ENCODE measurements at regions of chr1 and their contacts with region 1.

Region 1: GRCh38 chr1:10494754-10495474 is 20.2 kb downstream of the PEX14 start:
- DNase-seq: peak; percentile 95
- H3K4me3 Mint-ChIP-seq: peak overlapping the region; percentile 85
- H3K27ac Mint-ChIP-seq: peak overlapping the region; percentile 91
- H3K4me1 Mint-ChIP-seq: peaks cover 48% of the 10 kb centered on the region
- H3K27me3 Mint-ChIP-seq: no peaks in the 10 kb centered on the region

Region 2: GRCh38 chr1:10209905-10210810 is 284.8 kb before region 1 on chr1 and contains the start of gene KIF1B:
- intact Hi-C with region 1: loop called (anchors 10 kb)
- DNase-seq: peak; percentile 99
- H3K4me3 Mint-ChIP-seq: peak within 1 kb of the TSS; percentile 94
- H3K27ac Mint-ChIP-seq: peak within 1 kb of the TSS; percentile 86
- H3K4me1 Mint-ChIP-seq: peaks cover 26% of the 10 kb centered on the region
- H3K27me3 Mint-ChIP-seq: peaks cover 5% of the 10 kb centered on the region
- total RNA-seq, gene KIF1B: 17.8 and 19.3 TPM in 2 replicates

Region 3: DNA sequence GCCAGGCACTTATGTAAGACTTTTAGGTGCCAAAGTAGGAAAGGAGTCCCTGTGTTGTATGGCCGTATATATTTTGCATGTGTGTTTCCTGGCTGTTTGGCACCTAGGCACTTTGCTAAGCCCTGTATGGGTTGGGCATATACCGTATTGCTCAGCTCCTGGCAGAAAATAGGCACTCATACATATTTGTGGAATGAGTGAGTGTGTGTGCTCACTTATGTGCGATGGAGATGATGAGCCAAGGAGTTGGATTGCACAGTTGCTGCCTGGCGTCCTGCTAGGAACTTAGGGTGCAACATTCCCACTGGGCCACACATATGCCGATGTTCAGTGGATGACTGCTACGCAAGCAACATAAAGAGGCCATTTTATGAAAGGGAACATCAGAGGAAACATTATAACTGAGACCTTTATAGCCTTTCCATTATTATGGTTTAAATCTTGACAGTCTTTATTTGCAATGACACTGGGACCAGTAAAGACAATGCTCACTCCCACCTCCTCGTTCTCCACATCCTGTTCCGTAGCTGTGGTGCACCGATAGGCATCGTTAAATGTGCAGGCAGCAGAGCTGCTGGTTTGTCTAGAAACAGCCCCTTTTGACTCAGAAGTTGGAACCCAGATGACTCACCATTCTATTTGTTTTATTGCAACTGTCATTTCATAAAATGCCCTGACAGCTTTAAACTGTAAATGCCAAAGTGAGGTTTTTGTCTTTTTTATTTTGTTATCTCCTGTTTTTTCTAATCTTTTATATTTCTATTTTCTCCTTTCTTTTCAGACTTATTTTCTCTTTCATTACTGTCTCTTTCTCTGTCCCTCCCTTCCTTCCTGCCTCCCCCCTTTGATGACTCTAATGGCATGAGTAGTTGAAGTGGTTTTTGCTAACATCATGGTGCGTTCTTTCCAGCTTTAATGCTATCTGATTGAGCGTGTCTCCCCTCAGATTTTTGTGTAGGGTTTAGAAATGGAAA is 15.9 kb after region 1 on chr1:
- intact Hi-C with region 1: loop called (anchors 1 kb)
- DNase-seq: peak; percentile 93
- H3K4me3 Mint-ChIP-seq: peak overlapping the region; percentile 59
- H3K27ac Mint-ChIP-seq: peak overlapping the region; percentile 87
- H3K4me1 Mint-ChIP-seq: peaks cover 59% of the 10 kb centered on the region
- H3K27me3 Mint-ChIP-seq: no peaks in the 10 kb centered on the region

Region 4: GRCh38 chr1:10867138-10867721 is 372.3 kb after region 1 on chr1:
- intact Hi-C with region 1: loop called (anchors 1 kb)
- DNase-seq: peak; percentile 90
- H3K4me3 Mint-ChIP-seq: peak overlapping the region; percentile 41
- H3K27ac Mint-ChIP-seq: no peak overlapping the region
- H3K4me1 Mint-ChIP-seq: peaks cover 14% of the 10 kb centered on the region
- H3K27me3 Mint-ChIP-seq: peaks cover 65% of the 10 kb centered on the region

Region 5: GRCh38 chr1:11012250-11013171 is 517.6 kb after region 1 on chr1 and contains the start of gene TARDBP:
- intact Hi-C with region 1: loop called (anchors 5 kb)
- DNase-seq: peak; percentile 97
- H3K4me3 Mint-ChIP-seq: peak within 1 kb of the TSS; percentile 88
- H3K27ac Mint-ChIP-seq: peak within 1 kb of the TSS; percentile 98
- H3K4me1 Mint-ChIP-seq: peaks cover 18% of the 10 kb centered on the region
- H3K27me3 Mint-ChIP-seq: no peaks in the 10 kb centered on the region
- total RNA-seq, gene TARDBP: 211 and 224 TPM in 2 replicates

Measured in activated CD4-positive, alpha-beta T cell treated with anti-CD3 and anti-CD28 coated beads, Interleukin-2, amount 10 ng/mL, durations not matched to agents 24 days and 14 days (primary cell).